ENCODE measurements at regions of chr2 and their contacts with region 1.

Region 1: DNA sequence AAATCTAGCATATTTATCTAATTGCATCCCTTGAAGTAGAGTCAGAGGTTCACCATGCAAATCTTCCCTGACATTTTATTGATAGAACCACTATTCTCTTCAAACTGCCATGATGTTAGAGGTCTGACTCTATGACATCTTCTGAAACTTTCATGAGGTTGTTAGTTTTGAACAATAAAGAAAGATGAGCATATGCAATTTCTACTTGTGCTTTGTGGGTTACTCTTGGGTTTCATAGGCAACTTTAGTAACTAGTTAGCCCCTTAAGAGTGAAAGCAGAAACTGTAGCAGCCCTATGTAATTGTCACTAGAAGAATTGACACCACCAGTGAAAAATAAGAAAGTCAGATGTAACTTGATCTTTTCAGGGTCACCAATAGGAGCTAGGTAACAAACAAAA is 53.1 kb upstream of the ZEB2 start:
- DNase-seq: no peak
- H3K4me3 Mint-ChIP-seq: no peak overlapping the region
- H3K27ac Mint-ChIP-seq: no peak overlapping the region
- H3K4me1 Mint-ChIP-seq: peaks cover 23% of the 10 kb centered on the region
- H3K27me3 Mint-ChIP-seq: peaks cover 6% of the 10 kb centered on the region

Region 2: GRCh38 chr2:143802871-143803650 is 769.9 kb before region 1 on chr2:
- CTCF ChIA-PET with region 1: no interaction called
- POLR2A ChIA-PET with region 1: no interaction called
- intact Hi-C with region 1: loop called (anchors 5 kb)
- DNase-seq: no peak
- H3K4me3 Mint-ChIP-seq: peak overlapping the region; percentile 27
- H3K27ac Mint-ChIP-seq: peak overlapping the region; percentile 73
- H3K4me1 Mint-ChIP-seq: peaks cover 17% of the 10 kb centered on the region
- H3K27me3 Mint-ChIP-seq: peaks cover 7% of the 10 kb centered on the region

Region 3: DNA sequence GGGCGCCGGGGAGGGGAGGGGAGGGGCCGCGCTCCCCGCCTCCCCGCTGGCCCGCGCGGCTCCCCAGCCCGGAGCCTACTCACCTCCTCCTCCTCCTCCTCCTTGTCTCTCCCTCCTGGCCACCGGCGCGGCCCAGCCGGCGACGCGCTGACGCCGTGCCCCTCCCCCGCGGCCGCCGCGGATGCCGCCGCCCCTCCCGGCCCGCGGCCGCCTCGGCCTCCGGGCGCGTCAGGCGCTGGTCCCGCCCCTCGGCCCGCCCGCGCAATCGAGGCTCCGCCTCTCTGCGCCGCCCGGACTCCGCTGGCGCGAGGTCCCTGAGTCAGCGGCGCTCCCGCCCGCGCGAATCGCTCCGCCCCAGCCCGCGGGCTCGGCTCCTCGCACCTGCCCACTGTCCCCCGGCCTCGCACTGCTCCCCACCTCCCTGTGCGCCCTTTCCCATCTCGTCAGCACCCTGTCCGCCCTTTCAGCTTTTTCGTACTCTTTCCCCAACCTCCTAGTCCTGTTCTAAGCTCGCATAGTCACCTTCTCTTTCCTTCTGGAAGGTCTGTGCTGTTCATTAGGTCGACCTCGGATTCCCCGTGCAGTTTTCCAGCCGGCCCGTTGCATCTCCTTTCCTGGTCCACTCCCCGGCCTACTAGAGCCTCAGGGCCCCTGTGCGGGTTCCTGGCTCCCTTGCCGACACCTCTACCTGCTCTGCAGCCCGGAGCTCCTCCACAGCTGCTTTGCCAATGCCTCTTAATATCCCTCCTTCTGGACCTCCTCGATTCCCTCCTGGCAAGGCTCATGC is 240.4 kb before region 1 on chr2:
- CTCF ChIA-PET with region 1: no interaction called
- POLR2A ChIA-PET with region 1: no interaction called
- intact Hi-C with region 1: loop called (anchors 1 kb)
- DNase-seq: peak; percentile 92
- H3K4me3 Mint-ChIP-seq: peak overlapping the region; percentile 91
- H3K27ac Mint-ChIP-seq: peak overlapping the region; percentile 96
- H3K4me1 Mint-ChIP-seq: peaks cover 33% of the 10 kb centered on the region
- H3K27me3 Mint-ChIP-seq: no peaks in the 10 kb centered on the region

Region 4: DNA sequence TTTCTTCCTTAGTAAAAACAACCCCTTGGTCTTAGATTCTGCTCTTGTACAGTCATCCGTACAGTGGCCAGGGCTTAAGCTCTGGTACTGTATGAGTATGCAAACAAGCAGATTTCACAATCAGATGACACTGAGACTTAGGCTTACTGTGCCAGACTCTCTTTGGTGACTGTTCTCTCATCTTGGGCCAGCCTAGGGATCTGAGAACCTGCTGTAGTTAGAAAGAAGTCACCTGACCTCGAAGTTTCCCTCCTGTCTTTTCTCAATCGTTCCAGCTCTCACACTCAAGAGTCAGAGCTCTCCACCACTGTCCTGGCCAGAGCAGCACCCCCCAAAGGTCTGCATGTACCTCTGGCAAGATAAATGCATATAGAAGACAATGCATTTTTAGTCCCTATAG is 116.3 kb before region 1 on chr2:
- CTCF ChIA-PET with region 1: no interaction called
- POLR2A ChIA-PET with region 1: no interaction called
- intact Hi-C with region 1: loop called (anchors 5 kb)
- DNase-seq: peak; percentile 31
- H3K4me3 Mint-ChIP-seq: no peak overlapping the region
- H3K27ac Mint-ChIP-seq: no peak overlapping the region
- H3K4me1 Mint-ChIP-seq: peaks cover 52% of the 10 kb centered on the region
- H3K27me3 Mint-ChIP-seq: peaks cover 13% of the 10 kb centered on the region

Region 5: GRCh38 chr2:144529841-144530240 is 43.1 kb before region 1 on chr2:
- CTCF ChIA-PET with region 1: no interaction called
- POLR2A ChIA-PET with region 1: no interaction called
- intact Hi-C with region 1: no loop called
- DNase-seq: no peak
- H3K4me3 Mint-ChIP-seq: no peak overlapping the region
- H3K27ac Mint-ChIP-seq: no peak overlapping the region
- H3K4me1 Mint-ChIP-seq: no peaks in the 10 kb centered on the region
- H3K27me3 Mint-ChIP-seq: peaks cover 48% of the 10 kb centered on the region

Region 6: DNA sequence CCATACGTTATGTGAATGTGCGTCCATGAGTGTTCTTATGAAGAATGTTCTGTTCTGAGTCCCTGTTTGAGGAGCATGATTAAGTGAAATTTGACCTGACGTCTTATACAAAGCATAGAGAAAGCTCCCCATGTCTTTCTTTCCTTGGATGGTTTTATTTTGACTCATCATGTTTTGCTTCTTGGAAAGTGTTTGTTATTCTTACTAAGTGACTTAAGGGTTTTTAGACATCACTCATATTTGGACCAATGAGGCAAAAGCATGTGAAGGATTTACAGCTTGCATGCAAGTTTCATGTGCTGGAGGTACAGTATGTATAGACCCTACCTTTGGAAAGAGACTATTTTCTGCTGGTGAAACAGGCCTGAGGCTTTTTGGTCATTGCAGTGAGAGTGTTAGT is 19.6 kb before region 1 on chr2:
- CTCF ChIA-PET with region 1: no interaction called
- POLR2A ChIA-PET with region 1: no interaction called
- intact Hi-C with region 1: loop called (anchors 1 kb)
- DNase-seq: no peak
- H3K4me3 Mint-ChIP-seq: no peak overlapping the region
- H3K27ac Mint-ChIP-seq: no peak overlapping the region
- H3K4me1 Mint-ChIP-seq: peaks cover 6% of the 10 kb centered on the region
- H3K27me3 Mint-ChIP-seq: peaks cover 2% of the 10 kb centered on the region

Region 7: GRCh38 chr2:144583741-144584453 is 10.9 kb after region 1 on chr2:
- CTCF ChIA-PET with region 1: interaction called, 4 read pairs
- POLR2A ChIA-PET with region 1: interaction called, 4 read pairs
- intact Hi-C with region 1: loop called (anchors 1 kb)
- DNase-seq: peak; percentile 16
- H3K4me3 Mint-ChIP-seq: no peak overlapping the region
- H3K27ac Mint-ChIP-seq: no peak overlapping the region
- H3K4me1 Mint-ChIP-seq: peaks cover 9% of the 10 kb centered on the region
- H3K27me3 Mint-ChIP-seq: peaks cover 20% of the 10 kb centered on the region

Measured in activated CD4-positive, alpha-beta memory T cell treated with anti-CD3 and anti-CD28 coated beads for 36 hours (primary cell).